ENCODE measurements at regions of chr1 and their contacts with region 1.

Region 1: DNA sequence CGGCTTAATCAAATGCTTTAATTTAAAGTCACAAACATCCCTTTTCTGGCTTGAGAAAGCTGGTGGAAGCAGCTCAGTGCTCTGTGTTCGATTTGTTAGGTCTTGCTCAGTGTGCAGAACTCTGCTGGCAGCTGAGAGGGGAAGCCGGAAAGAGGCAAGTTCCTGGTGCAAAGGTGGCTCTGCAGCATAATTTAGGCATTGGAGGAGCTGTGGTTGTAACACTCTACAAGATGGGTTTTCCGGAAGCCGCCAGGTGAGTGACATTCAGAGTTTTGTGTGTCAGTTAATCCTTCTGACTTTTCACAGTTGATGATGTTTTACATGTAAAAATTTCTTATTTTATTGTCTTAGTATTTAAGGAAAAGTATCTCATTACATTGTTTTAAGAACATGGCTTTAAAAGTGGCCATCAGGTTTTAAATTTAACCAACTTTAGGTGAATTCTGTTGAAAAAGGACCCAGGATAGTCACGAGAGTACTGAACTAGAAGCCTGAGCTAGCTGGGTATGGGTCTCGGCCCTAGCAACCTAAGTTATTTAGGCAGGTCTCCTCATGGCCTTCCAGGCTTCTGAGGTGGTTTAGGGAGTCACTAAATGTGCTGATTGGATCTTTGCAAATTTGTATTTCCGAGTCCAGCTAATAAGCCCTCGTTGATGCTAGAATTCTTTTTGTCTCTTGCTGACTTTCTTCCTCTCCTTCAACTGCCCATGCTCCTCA is 47.1 kb upstream of the PODN start:
- DNase-seq: peak; percentile 27 to 91 (median 84)
- ATAC-seq: peak; percentile 100
- H3K4me3 ChIP-seq: peak overlapping the region; percentile 65
- H3K4me3 Mint-ChIP-seq: peak overlapping the region; percentile 81 to 96 (median 90)
- H3K27ac ChIP-seq: peak overlapping the region; percentile 57
- H3K27ac Mint-ChIP-seq: peak overlapping the region; percentile 57 to 92 (median 84)
- H3K4me1 ChIP-seq: peaks cover 14 to 16% of the 10 kb centered on the region in 2 donors
- H3K4me1 Mint-ChIP-seq: peaks cover 20 to 48% (median 40%) of the 10 kb centered on the region in 7 donors
- H3K27me3 ChIP-seq: no peaks in the 10 kb centered on the region
- H3K27me3 Mint-ChIP-seq: no peaks in the 10 kb centered on the region

Region 2: GRCh38 chr1:52927212-52928014 is 87.5 kb before region 1 on chr1 and contains the start of gene SCP2:
- CTCF ChIA-PET with region 1: interaction called, 3 read pairs
- POLR2A ChIA-PET with region 1: interaction called, 4 read pairs
- intact Hi-C with region 1: loop called (anchors 1 to 5 kb)
- DNase-seq: peak; percentile 64 to 83 (median 75)
- ATAC-seq: peak; percentile 96
- H3K4me3 ChIP-seq: peak within 1 kb of the TSS; percentile 87
- H3K4me3 Mint-ChIP-seq: peak within 1 kb of the TSS; percentile 82 to 96 (median 88)
- H3K27ac ChIP-seq: peak within 1 kb of the TSS; percentile 77
- H3K27ac Mint-ChIP-seq: peak within 1 kb of the TSS; percentile 33 to 93 (median 75)
- H3K4me1 ChIP-seq: peaks cover 4 to 7% of the 10 kb centered on the region in 2 donors
- H3K4me1 Mint-ChIP-seq: peaks cover 16 to 41% (median 27%) of the 10 kb centered on the region in 7 donors
- H3K27me3 ChIP-seq: no peaks in the 10 kb centered on the region
- H3K27me3 Mint-ChIP-seq: peaks cover 0 to 6% (median 0%) of the 10 kb centered on the region in 5 donors
- total RNA-seq, gene SCP2: 39.4 to 88.7 (median 48.3) TPM

Region 3: GRCh38 chr1:53091841-53092645 is 77.1 kb after region 1 on chr1:
- CTCF ChIA-PET with region 1: no interaction called
- POLR2A ChIA-PET with region 1: no interaction called
- intact Hi-C with region 1: no loop called
- DNase-seq: no peak
- ATAC-seq: no peak
- H3K4me3 ChIP-seq: no peak overlapping the region
- H3K4me3 Mint-ChIP-seq: no peak overlapping the region
- H3K27ac ChIP-seq: no peak overlapping the region
- H3K27ac Mint-ChIP-seq: no peak overlapping the region
- H3K4me1 ChIP-seq: no peaks in the 10 kb centered on the region
- H3K4me1 Mint-ChIP-seq: no peaks in the 10 kb centered on the region
- H3K27me3 ChIP-seq: no peaks in the 10 kb centered on the region
- H3K27me3 Mint-ChIP-seq: no peaks in the 10 kb centered on the region

Region 4: GRCh38 chr1:53413175-53414001 is 398.4 kb after region 1 on chr1:
- CTCF ChIA-PET with region 1: no interaction called
- POLR2A ChIA-PET with region 1: no interaction called
- intact Hi-C with region 1: loop called in 1 of 2 experiments (anchors 1 kb)
- DNase-seq: peak in 6 of 9 donors; percentile 10 to 75 (median 32)
- ATAC-seq: peak; percentile 81
- H3K4me3 ChIP-seq: peak overlapping the region; percentile 5
- H3K4me3 Mint-ChIP-seq: peak overlapping the region in 7 of 10 donors; percentile 10 to 83 (median 30)
- H3K27ac ChIP-seq: peak overlapping the region; percentile 5
- H3K27ac Mint-ChIP-seq: peak overlapping the region; percentile 55 to 99 (median 84)
- H3K4me1 ChIP-seq: peaks cover 19 to 66% of the 10 kb centered on the region in 2 donors
- H3K4me1 Mint-ChIP-seq: peaks cover 19 to 72% (median 27%) of the 10 kb centered on the region in 7 donors
- H3K27me3 ChIP-seq: no peaks in the 10 kb centered on the region
- H3K27me3 Mint-ChIP-seq: peaks cover 0 to 9% (median 0%) of the 10 kb centered on the region in 5 donors